ENCODE measurements at regions of chr7 and their contacts with region 1.

Region 1: GRCh38 chr7:95690367-95690947 is 81.9 kb upstream of the DYNC1I1 start:
- DNase-seq: peak in 1 of 10 donors; percentile 34

Region 2: DNA sequence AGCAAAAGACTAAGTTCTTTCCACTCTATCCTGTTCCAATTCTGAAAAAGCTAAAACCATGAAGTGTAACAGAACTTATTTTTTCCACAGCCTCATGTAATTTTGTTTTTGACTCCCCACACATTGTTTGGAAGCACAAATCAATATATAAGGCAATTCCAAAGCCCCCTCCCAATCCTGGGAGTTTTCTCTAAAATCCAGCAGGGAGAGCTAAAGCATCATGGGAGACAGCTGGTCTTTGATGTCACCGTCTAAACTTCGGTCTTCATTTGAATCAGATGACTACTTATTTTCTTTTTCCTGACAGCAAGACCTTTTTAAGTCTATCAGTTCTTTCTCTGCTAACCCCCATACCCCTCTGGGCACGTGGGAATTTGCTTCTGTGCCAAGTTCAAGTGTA is 332.8 kb before region 1 on chr7:
- intact Hi-C with region 1: loop called (anchors 5 kb)
- DNase-seq: no peak

Region 3: DNA sequence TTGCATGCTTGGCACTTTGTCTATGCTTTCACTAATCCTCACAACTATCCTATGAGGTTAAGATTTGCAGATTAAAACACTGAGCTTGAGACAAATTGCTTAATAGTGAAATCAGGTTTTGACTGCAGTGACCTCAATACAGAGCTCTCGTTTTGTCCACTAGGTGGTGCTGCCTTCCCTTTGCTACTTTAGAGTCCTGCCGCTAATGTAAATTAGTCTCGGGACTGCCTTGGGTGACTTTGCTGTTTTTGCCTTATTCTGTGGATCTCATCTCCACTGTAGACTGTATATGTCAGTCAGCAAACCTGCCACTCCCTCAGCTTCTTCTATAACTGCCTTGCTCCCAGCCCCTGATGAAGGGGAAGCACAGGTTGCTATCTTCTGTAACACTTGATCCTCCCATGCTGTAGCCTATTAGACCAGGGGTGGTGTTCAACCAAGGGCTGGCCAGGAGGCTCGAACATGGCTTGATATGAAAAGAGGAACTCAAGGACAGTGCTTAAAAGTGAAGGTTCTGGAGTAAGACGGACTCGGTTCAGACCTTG is 178.7 kb before region 1 on chr7:
- intact Hi-C with region 1: loop called (anchors 1 kb)
- DNase-seq: peak in 9 of 10 donors; percentile 32 to 89 (median 74)

Region 4: DNA sequence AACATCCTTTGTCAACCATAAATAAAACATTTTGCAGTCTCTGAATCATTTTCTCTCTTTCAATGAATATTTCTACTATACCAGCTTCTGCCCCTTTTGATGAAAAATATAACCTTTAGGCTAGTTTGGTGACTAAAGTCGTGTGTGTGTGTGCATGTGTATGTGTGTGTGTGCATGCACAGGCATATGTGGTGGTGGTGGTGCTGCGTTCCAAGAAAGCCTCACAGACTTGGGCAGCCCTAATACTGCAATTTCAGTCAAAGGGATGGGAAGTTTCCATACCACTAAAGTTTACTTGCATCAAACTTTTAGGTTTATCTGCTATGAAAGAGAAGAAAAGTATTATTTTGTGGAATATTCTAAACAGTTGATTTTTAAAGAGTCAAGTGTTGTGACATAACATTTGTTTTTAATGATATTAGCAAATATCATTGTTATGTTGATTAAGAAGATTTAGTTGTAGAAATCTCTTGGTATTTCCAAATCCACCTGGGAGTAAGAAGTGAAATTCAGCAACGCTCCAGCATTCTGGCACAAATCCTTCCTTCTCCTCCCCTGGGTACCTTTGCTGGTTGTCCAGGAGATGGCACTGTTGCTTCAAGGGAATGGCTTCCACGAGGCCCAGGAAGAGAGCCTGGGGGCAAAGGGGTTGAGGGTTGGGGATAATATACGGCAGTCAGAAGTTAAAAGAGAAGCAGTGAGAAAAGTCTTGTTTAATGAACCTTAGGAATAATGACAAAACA is 163.3 kb before region 1 on chr7:
- intact Hi-C with region 1: loop called (anchors 1 kb)
- DNase-seq: peak in 8 of 10 donors; percentile 27 to 92 (median 60)

Region 5: GRCh38 chr7:95596198-95597063 is 94.0 kb before region 1 on chr7 and contains the start of gene PDK4:
- intact Hi-C with region 1: loop called (anchors 5 kb)
- DNase-seq: peak; percentile 79 to 99 (median 92)